ENCODE measurements at regions of chr2 and their contacts with region 1.

Region 1: DNA sequence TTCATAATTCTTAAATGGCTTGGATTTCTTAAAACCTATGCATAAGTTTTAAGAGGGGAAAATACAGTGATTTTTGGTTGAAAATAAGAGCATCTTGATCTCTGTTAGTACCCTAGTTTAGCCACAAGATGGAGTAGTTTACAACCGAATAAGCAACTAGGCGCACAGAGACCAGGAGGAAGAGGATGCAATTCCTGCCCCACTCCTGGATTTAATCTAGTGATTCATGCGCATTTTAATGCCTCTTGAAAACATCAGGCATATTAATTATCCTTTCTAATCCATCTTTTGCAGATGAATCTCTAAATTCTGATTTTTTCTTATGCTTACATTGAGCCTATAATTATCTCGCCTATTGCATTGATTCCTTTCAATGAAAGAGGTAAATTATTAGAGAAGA is 76.7 kb downstream of the MRPS9 start:
- DNase-seq: peak; percentile 74
- ATAC-seq: peak; percentile 86
- H3K4me3 ChIP-seq: no peak overlapping the region
- H3K27ac ChIP-seq: no peak overlapping the region
- H3K4me1 ChIP-seq: no peaks in the 10 kb centered on the region
- H3K27me3 ChIP-seq: peaks cover 3% of the 10 kb centered on the region; the same call in 1 of the 2 replicates
- CTCF ChIP-seq: peak; percentile 85
- POLR2A ChIP-seq: no peak
- RAD21 ChIP-seq: peak; percentile 89

Region 2: DNA sequence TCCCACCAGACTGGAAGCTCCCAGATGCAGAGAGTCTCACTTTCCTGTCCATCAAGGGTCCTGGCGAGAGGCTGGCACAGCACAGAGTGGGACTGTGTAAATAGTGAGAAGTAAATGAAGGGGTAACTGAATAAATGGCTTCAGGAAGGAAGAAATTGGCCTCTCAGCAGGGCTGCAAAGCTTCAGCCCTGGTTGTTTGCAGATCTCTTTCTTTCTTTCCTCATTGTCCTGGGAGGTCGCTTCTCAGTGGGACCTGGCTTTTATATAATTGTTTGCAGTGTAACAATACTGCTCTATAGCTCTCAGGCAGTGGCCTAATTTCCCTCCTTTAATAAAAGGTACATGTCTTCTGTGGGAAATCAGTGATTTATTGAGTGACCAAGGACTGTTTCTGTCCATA is 52.1 kb after region 1 on chr2:
- CTCF ChIA-PET with region 1: no interaction called
- POLR2A ChIA-PET with region 1: no interaction called
- dilution Hi-C with region 1: no loop called
- in situ Hi-C with region 1: no loop called
- intact Hi-C with region 1: no loop called
- DNase-seq: no peak
- ATAC-seq: no peak
- H3K4me3 ChIP-seq: no peak overlapping the region
- H3K27ac ChIP-seq: no peak overlapping the region
- H3K4me1 ChIP-seq: no peaks in the 10 kb centered on the region
- H3K27me3 ChIP-seq: peaks cover 7% of the 10 kb centered on the region
- CTCF ChIP-seq: no peak
- POLR2A ChIP-seq: no peak
- RAD21 ChIP-seq: no peak

Region 3: GRCh38 chr2:105235388-105236054 is 121.0 kb after region 1 on chr2:
- CTCF ChIA-PET with region 1: interaction called, 6 read pairs
- POLR2A ChIA-PET with region 1: interaction called, 3 read pairs
- dilution Hi-C with region 1: no loop called
- in situ Hi-C with region 1: loop called (anchors 5 kb)
- intact Hi-C with region 1: loop called (anchors 1 kb)
- DNase-seq: peak; percentile 80
- ATAC-seq: peak; percentile 80
- H3K4me3 ChIP-seq: no peak overlapping the region
- H3K27ac ChIP-seq: no peak overlapping the region
- H3K4me1 ChIP-seq: 0 out of 2 replicates have a peak, but pooled peaks cover 1% of the 10 kb centered on the region
- H3K27me3 ChIP-seq: peaks cover 9% of the 10 kb centered on the region
- CTCF ChIP-seq: peak; percentile 82
- POLR2A ChIP-seq: no peak
- RAD21 ChIP-seq: peak; percentile 63

Region 4: GRCh38 chr2:105294844-105295481 is 180.4 kb after region 1 on chr2:
- CTCF ChIA-PET with region 1: interaction called, 7 read pairs
- POLR2A ChIA-PET with region 1: no interaction called
- dilution Hi-C with region 1: no loop called
- in situ Hi-C with region 1: loop called (anchors 5 kb)
- intact Hi-C with region 1: loop called (anchors 1 kb)
- DNase-seq: peak; percentile 68
- ATAC-seq: peak; percentile 94
- H3K4me3 ChIP-seq: no peak overlapping the region
- H3K27ac ChIP-seq: no peak overlapping the region
- H3K4me1 ChIP-seq: 0 out of 2 replicates have a peak, but pooled peaks cover 2% of the 10 kb centered on the region
- H3K27me3 ChIP-seq: no peaks in the 10 kb centered on the region
- CTCF ChIP-seq: peak; percentile 67
- POLR2A ChIP-seq: no peak
- RAD21 ChIP-seq: peak; percentile 68

Region 5: GRCh38 chr2:105545730-105546627 is 431.4 kb after region 1 on chr2:
- CTCF ChIA-PET with region 1: no interaction called
- POLR2A ChIA-PET with region 1: no interaction called
- dilution Hi-C with region 1: no loop called
- in situ Hi-C with region 1: no loop called
- intact Hi-C with region 1: loop called (anchors 1 kb)
- DNase-seq: peak; percentile 62
- ATAC-seq: peak; percentile 94
- H3K4me3 ChIP-seq: no peak overlapping the region
- H3K27ac ChIP-seq: no peak overlapping the region
- H3K4me1 ChIP-seq: no peaks in the 10 kb centered on the region
- H3K27me3 ChIP-seq: peaks cover 33% of the 10 kb centered on the region
- CTCF ChIP-seq: peak; percentile 80
- POLR2A ChIP-seq: no peak
- RAD21 ChIP-seq: peak; percentile 73